Heart right ventricle (tissue), 16 donors: ENCODE measurements at regions of chr19 and their contacts with region 1.

Region 1: DNA sequence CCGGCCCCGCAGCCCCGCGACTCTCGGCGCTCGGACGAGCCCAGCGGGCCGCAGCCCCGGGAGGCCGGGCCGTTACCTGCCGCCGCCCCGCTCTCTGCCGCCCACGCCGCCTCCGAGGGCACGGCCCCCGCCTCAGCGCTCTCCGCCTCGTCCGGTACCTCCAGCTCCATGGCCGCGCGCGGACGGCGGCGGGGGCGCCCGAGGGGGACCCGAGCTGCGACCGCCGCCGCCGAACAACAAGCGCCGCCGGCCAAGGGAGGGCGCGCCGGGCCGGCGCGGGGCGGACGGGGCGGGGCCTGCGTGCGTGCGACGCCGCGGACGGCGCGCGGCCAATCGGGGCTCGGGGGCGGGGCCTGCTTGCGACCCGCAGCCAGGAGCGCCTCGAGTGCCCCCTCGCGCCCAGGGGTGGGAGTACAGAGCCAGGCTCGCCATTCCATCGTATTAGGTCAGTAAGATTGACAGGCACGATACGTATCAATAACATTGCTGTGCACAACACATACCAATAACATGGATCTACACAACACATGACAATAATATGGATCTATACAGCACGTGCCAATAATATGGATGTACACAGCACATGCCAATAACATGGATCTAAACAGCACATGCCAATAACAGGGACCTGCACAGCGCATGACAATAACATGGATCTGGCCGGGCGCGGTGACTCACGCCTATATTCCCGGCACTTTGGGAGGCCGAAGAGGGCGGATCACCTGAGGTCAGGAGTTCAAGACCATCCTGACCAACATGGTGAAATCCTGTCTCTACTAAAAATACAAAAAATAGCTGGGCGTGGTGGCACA is at the start of gene PIP5K1C:
- DNase-seq: peak; percentile 89 to 93
- ATAC-seq: peak; percentile 83 to 96 (median 88)
- H3K4me3 ChIP-seq: peak within 1 kb of the TSS; percentile 65 to 100 (median 92)
- H3K27ac ChIP-seq: peak within 1 kb of the TSS; percentile 82 to 95 (median 90)
- H3K4me1 ChIP-seq: peaks cover 0 to 27% (median 14%) of the 10 kb centered on the region in 9 donors
- H3K27me3 ChIP-seq: peaks cover 0 to 9% (median 0%) of the 10 kb centered on the region in 7 donors
- CTCF ChIP-seq: peak; percentile 72 to 92 (median 82)
- total RNA-seq, gene PIP5K1C: 28.2 to 46.6 (median 36.3) TPM

Region 2: DNA sequence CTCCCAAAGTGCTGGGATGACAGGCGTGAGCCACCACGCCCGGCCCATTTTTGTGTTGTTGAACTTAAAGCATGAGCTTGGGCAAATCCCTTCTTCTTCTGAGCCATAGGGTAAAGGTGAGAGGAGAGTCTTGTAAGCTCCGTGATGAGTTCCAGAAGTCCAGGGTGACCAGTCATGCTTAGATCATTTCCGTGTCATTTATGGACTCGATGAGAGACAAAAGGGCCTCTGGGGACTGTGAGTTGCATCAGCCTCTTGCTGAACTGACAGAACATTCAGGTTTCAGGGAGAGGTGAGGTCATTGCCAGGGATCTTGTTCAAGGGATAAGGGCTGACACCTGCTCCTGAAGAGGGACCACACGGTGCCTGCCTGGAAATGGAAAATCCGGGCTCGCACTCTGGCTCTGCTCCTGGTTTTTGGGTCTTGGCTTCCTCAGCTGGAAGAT is 1170.9 kb before region 1 on chr19:
- intact Hi-C with region 1: no loop called
- DNase-seq: no peak
- ATAC-seq: peak in 3 of 8 donors; percentile 20 to 77 (median 23)
- H3K4me3 ChIP-seq: no peak overlapping the region
- H3K27ac ChIP-seq: no peak overlapping the region
- H3K4me1 ChIP-seq: peaks cover 2 to 17% (median 9%) of the 10 kb centered on the region in 9 donors
- H3K27me3 ChIP-seq: no peaks in the 10 kb centered on the region
- CTCF ChIP-seq: no peak

Region 3: GRCh38 chr19:3532148-3532786 is 168.2 kb before region 1 on chr19:
- intact Hi-C with region 1: no loop called
- DNase-seq: no peak
- ATAC-seq: no peak
- H3K4me3 ChIP-seq: no peak overlapping the region
- H3K27ac ChIP-seq: no peak overlapping the region
- H3K4me1 ChIP-seq: peaks cover 0 to 13% (median 0%) of the 10 kb centered on the region in 9 donors
- H3K27me3 ChIP-seq: no peaks in the 10 kb centered on the region
- CTCF ChIP-seq: no peak

Region 4: GRCh38 chr19:3544742-3545668 is 155.4 kb before region 1 on chr19:
- intact Hi-C with region 1: loop called in 7 of 10 experiments (anchors 5 to 10 kb)
- DNase-seq: peak; percentile 64 to 83
- ATAC-seq: peak; percentile 51 to 72 (median 68)
- H3K4me3 ChIP-seq: no peak overlapping the region
- H3K27ac ChIP-seq: no peak overlapping the region
- H3K4me1 ChIP-seq: peaks cover 0 to 17% (median 0%) of the 10 kb centered on the region in 9 donors
- H3K27me3 ChIP-seq: no peaks in the 10 kb centered on the region
- CTCF ChIP-seq: peak; percentile 87 to 98 (median 92)

Region 5: GRCh38 chr19:3557461-3558248 is 142.8 kb before region 1 on chr19 and contains the start of gene MFSD12:
- intact Hi-C with region 1: loop called in 3 of 10 experiments (anchors 10 kb)
- DNase-seq: peak; percentile 94 to 95
- ATAC-seq: peak; percentile 97 to 99 (median 98)
- H3K4me3 ChIP-seq: peak within 1 kb of the TSS; percentile 62 to 96 (median 89)
- H3K27ac ChIP-seq: peak within 1 kb of the TSS in 9 of 10 donors; percentile 54 to 90 (median 81)
- H3K4me1 ChIP-seq: peaks cover 10 to 52% (median 49%) of the 10 kb centered on the region in 9 donors
- H3K27me3 ChIP-seq: no peaks in the 10 kb centered on the region
- CTCF ChIP-seq: no peak
- total RNA-seq, gene MFSD12: 11.6 to 41.3 (median 21.0) TPM

Region 6: DNA sequence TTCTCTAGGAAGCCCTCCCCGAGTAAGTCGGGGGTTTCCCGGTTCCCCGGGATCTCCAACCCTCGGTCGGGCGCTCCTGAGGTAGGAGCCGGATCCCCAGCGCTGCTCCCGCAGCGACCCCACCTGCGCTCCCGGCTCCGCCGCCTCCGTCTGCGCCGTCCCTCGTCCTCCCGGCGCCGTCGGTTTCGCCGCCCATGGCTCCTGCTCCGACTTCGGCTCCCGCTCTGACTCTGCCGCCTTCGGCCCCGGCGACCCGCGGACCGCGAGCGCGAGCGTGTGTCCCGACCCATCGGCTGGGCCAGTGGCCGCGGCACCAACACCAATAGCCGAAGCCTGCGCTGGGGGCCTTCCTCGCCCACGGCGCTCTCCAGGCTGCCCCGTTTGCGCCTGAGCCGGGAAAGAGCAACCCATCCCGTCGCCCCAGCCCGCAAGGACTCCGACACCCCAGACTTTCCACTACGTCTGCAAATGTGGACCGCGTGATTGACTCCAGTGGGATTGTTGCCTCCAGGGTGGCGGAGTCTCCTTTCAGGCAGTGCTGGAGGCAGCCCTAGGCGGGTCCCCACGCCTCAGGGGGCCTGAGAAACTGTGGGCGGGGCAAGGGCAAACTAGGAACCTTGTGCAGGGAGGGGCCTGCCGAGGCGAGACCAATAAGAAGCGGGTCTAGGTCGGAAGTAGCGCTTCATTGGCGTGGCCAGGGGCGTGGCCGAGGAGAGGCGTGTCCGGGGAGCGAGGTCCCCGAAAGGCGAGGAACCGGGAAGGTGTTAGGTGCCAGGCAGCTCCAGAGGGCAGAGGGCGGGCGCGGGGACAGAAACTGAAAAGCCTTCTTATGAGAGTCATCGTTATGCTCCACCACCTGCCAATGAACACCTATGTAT is 73.7 kb before region 1 on chr19 and contains the start of gene CACTIN:
- intact Hi-C with region 1: loop called in 1 of 10 experiments (anchors 2 kb)
- DNase-seq: peak; percentile 99
- ATAC-seq: peak; percentile 97 to 99 (median 99)
- H3K4me3 ChIP-seq: peak within 1 kb of the TSS; percentile 64 to 100 (median 90)
- H3K27ac ChIP-seq: peak within 1 kb of the TSS; percentile 85 to 98 (median 95)
- H3K4me1 ChIP-seq: peaks cover 11 to 27% (median 19%) of the 10 kb centered on the region in 9 donors
- H3K27me3 ChIP-seq: no peaks in the 10 kb centered on the region
- CTCF ChIP-seq: peak in 3 of 9 donors; percentile 3 to 19 (median 12)
- total RNA-seq, gene CACTIN: 9.7 to 15.8 (median 12.1) TPM

Region 7: DNA sequence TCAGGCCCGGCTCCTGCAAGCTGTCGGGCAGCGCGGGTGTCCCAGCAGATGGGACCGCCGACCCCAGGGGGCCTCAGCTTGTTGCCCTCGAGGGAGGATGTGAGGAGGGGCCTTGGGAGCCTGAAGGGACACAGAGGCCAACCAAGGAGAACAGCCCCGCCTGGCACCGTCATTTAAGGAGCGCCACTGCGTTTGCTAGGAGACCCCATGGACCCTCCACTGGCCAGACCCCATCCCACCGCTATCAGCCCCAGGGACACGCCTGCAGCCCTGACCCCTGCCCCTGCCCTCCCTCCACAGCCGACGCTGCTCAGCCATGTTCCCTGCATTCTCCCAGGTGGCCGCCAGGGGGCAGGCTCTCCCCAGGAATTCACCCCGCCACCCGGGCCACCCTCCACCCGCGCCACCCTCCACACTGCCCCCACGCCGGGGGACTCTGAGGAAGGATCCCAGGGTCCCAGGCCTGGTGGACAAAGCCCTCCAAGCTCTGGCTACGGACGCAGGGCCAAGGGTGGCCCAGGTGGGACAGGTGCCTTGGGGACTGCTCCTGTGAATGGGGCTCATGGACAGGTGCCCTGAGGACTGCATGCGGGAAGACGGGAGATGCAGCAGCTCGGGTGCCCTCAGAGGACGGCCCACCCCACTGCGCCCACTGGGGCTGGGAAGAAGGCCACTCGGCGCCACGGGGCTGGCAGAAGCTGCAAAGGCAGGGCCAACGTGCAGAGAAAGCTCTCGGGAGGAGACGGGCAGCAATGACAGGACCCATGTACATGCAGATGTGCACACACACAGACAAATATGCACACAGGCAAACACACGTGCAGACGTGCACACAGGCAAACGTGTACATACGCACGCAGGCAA is 34.5 kb before region 1 on chr19:
- intact Hi-C with region 1: loop called (anchors 1 to 5 kb)
- DNase-seq: peak; percentile 67 to 80
- ATAC-seq: peak; percentile 26 to 43 (median 30)
- H3K4me3 ChIP-seq: no peak overlapping the region
- H3K27ac ChIP-seq: peak overlapping the region in 3 of 10 donors; percentile 4 to 39 (median 11)
- H3K4me1 ChIP-seq: peaks cover 17 to 57% (median 42%) of the 10 kb centered on the region in 9 donors
- H3K27me3 ChIP-seq: peaks cover 0 to 1% (median 0%) of the 10 kb centered on the region in 7 donors
- CTCF ChIP-seq: peak; percentile 87 to 97 (median 95)

Region 8: GRCh38 chr19:3670796-3671679 is 29.4 kb before region 1 on chr19:
- intact Hi-C with region 1: loop called (anchors 1 to 5 kb)
- DNase-seq: peak; percentile 84 to 93
- ATAC-seq: peak; percentile 65 to 88 (median 81)
- H3K4me3 ChIP-seq: peak overlapping the region in 9 of 10 donors; percentile 28 to 52 (median 38)
- H3K27ac ChIP-seq: peak overlapping the region; percentile 90 to 100 (median 99)
- H3K4me1 ChIP-seq: peaks cover 24 to 75% (median 55%) of the 10 kb centered on the region in 9 donors
- H3K27me3 ChIP-seq: peaks cover 0 to 10% (median 0%) of the 10 kb centered on the region in 7 donors
- CTCF ChIP-seq: no peak

Region 9: DNA sequence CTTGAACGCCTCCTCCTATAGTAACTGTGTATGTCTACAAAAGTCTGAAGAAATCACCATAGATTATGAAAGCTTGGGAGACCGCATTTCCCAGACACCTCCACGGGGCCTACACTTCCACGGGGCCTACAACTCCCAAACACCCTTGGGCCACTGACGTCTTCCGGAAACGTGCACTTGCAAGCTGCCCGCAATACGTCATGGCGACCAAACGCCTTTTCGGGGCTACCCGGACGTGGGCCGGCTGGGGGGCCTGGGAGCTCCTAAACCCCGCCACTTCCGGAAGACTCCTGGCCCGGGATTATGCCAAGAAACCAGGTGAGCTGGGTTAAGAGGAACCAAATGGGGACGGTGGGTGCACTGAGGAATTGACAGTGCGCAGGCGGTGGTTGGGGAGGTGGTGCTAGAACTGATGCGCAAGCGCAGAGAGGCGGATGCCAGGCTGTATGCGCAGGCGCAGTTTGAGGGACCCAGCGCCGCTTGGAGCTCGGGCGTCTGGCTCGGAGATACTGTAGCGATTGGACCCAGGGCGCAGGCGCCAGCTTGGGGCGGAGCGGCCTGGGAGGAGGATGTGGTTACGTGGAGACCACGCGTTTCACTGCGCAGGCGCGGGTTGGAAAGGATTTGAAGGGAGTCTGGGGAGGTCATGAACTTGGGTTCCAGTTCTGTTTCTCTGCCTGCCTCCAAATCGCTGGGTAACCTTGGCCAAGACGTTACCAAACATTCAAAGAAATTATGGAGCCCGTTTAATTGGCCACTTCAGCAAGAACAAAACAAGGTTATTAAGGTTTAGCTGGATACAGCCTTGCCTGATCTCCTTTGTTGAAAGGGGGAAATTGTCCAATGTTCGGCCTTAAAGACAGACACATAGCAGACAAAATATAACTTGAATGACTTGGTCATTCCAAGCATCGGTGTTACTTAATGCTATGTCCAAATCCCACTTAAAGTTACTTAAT is 62.4 kb after region 1 on chr19 and contains the start of gene MRPL54:
- intact Hi-C with region 1: loop called in 1 of 10 experiments (anchors 2 kb)
- DNase-seq: peak; percentile 99 to 100
- ATAC-seq: peak; percentile 94 to 98 (median 96)
- H3K4me3 ChIP-seq: peak within 1 kb of the TSS; percentile 68 to 99 (median 91)
- H3K27ac ChIP-seq: peak within 1 kb of the TSS; percentile 95 to 100 (median 97)
- H3K4me1 ChIP-seq: peaks cover 3 to 48% (median 35%) of the 10 kb centered on the region in 9 donors
- H3K27me3 ChIP-seq: no peaks in the 10 kb centered on the region
- CTCF ChIP-seq: no peak
- total RNA-seq, gene MRPL54: 61.4 to 93.4 (median 67.0) TPM